GM13976 (cell line): ENCODE measurements at regions of chr3 and their contacts with region 1.

Region 1: DNA sequence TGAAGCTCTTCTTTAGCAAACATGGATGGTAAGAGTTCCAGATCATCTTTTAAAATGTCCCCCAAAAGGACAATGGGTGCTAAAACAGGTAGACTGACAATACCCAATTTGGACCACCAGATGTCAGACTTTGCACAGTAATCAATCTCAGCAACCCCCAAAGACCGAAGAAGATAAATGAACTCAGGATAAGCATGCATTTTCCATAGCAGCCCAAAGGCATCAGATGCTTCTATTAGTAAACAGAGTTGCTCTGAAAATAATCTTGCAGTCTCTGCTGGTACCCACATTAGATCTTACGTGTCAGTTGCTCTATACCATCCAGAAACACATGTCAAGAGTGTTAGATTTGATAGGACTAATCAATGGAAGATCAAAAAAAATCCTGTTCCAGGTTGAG is 20.6 kb downstream of the MYH15 start:
- DNase-seq: peak; percentile 49
- CTCF ChIP-seq: peak; percentile 69

Region 2: DNA sequence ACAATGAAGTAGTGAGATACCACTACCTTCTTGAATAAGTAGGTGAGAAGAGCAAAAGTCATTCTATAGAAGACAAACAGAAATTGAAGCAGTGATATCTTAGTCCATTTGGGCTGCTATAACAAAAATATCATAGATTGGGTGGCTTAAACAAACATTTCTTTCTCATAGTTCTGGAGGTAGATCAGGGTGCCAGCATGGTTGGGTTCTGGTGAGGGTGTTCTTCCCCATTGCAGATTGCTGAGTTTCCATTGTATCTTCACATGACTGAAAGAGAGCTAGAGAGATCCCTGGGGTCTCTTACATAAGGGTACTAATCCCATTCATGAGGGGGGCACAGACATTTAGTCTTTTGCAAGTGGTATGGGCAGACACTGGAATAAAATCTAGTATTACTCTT is 234.6 kb before region 1 on chr3:
- in situ Hi-C with region 1: no loop called
- DNase-seq: no peak
- CTCF ChIP-seq: no peak

Region 3: GRCh38 chr3:108552267-108553159 is 62.7 kb after region 1 on chr3:
- in situ Hi-C with region 1: loop called (anchors 5 kb)
- DNase-seq: peak; percentile 6
- CTCF ChIP-seq: peak; percentile 40

Region 4: GRCh38 chr3:108907194-108907593 is 417.4 kb after region 1 on chr3:
- in situ Hi-C with region 1: loop called (anchors 10 kb)
- DNase-seq: no peak
- CTCF ChIP-seq: no peak